ENCODE measurements at regions of chr3 and their contacts with region 1.

Region 1: DNA sequence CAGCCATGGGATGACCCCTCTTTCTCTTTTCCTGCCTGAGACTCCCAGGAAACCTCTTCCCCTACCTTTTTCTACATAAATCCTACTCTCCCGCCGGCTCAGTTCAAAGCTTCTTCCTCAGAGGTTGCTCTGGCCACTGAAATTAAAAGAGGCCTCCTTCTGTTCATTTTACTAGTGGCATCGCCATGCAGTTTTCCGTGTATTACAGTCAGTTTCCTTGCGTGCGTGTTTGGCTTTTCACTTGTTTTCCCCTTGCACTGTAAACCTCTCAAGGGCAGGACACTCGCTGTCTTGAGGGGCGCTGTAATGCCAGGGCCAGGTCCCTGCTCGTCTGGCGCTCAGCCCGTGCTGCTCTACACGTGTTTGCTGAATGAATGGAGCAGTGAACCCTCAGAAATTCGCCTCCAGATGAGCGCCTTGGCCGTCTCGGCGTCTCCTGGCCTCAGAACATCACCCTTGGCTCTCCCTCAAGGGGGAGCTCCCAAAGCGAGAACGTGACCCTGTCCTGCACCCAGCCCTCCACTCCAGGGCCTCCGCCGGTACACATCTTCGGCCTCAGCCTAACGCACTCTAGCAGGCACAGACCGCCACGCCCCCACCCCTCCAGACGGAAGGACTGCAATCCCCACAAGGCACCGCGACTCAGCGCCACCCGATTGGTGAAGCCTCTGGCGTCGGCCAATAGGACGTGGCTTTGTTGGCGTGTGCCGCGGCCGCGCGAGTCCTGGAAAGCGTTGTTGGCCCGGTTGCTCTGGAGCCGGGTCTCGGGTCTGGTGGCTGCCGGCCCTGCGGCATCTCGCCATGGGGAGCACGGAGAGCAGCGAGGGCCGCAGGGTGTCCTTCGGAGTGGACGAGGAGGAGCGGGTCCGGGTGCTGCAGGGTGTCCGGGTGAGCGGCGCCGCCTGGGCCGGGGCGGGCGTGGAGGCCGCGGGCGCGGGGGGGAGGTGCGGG is at the start of gene CHCHD6:
- DNase-seq: peak; percentile 92
- H3K4me3 Mint-ChIP-seq: peak within 1 kb of the TSS; percentile 96
- H3K27ac Mint-ChIP-seq: peak within 1 kb of the TSS; percentile 85
- H3K4me1 Mint-ChIP-seq: peaks cover 24% of the 10 kb centered on the region
- H3K27me3 Mint-ChIP-seq: peaks cover 40% of the 10 kb centered on the region
- total RNA-seq, gene CHCHD6: 15.7 and 17.5 TPM in 2 replicates

Region 2: GRCh38 chr3:125990253-125990970 is 713.4 kb before region 1 on chr3:
- intact Hi-C with region 1: loop called (anchors 10 kb)
- DNase-seq: peak; percentile 68
- H3K4me3 Mint-ChIP-seq: peak overlapping the region; percentile 90
- H3K27ac Mint-ChIP-seq: peak overlapping the region; percentile 88
- H3K4me1 Mint-ChIP-seq: peaks cover 16% of the 10 kb centered on the region
- H3K27me3 Mint-ChIP-seq: peaks cover 15% of the 10 kb centered on the region

Region 3: GRCh38 chr3:126357295-126358037 is 346.3 kb before region 1 on chr3 and contains the start of gene KLF15:
- intact Hi-C with region 1: loop called (anchors 5 kb)
- DNase-seq: peak; percentile 73
- H3K4me3 Mint-ChIP-seq: peak within 1 kb of the TSS; percentile 84
- H3K27ac Mint-ChIP-seq: peak within 1 kb of the TSS; percentile 48
- H3K4me1 Mint-ChIP-seq: peaks cover 8% of the 10 kb centered on the region
- H3K27me3 Mint-ChIP-seq: peaks cover 46% of the 10 kb centered on the region
- total RNA-seq, gene KLF15: 0.08 and 0.22 TPM in 2 replicates

Region 4: DNA sequence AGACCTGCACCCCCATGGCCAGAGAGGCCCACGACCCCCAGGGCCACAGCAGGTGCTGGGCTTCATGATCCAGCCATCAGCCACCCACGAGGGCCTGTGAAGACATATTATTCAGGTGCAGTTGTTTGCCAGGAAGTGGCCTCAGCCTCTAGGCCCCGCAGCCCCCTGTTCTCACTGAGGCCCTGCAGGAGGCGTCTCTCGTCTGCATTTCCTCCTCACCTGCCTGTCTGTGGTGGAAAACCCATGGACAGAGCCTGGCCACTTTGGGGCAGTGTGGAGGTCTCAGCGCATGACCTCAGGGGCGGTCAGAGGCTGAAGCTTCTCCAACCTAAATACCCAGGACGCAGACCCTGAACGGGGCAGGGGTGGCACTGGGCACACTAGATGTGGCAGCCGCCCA is 204.9 kb before region 1 on chr3:
- intact Hi-C with region 1: no loop called
- DNase-seq: no peak
- H3K4me3 Mint-ChIP-seq: no peak overlapping the region
- H3K27ac Mint-ChIP-seq: no peak overlapping the region
- H3K4me1 Mint-ChIP-seq: peaks cover 7% of the 10 kb centered on the region
- H3K27me3 Mint-ChIP-seq: no peaks in the 10 kb centered on the region

Region 5: DNA sequence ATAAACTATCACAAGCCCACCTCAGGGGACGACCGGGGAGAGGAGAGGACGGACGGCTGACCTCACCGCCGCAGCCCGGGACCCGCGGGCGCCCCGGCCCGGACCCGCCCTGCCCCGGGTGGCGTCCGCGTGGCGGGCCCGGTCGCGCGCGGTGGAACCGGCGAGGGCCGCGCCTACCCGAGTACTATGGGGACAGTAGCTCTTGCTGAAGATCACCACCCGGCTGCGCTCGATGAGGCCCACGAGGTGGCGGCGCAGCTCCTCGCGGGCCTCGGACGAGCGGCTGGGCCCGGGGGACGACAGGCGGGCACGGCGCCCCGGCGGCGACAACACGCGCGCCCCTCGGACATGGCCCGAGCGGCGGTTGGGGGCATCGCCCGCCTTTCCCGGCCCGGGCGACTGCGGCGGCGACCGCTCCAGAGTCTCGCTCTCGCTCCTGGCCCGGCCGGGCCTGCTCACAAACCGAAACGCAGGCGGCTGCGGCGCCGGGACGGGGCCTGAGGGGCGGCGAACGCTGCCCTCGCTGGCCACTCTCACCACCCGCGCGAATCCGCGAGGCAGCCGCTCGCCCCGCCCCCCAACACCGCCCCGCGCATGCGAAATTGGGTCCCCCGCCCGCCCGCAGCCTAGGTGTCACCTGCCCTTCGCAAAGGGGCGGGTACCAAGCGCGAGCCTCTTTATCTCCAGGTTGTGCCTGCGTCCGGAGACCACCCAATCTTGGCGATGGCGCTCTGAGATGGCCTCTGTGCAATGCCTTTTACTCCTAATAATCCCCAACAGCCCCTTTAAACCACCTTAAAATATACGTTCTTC is 49.0 kb before region 1 on chr3 and contains the start of gene TXNRD3:
- intact Hi-C with region 1: loop called (anchors 2 kb)
- DNase-seq: peak; percentile 48
- H3K4me3 Mint-ChIP-seq: peak within 1 kb of the TSS; percentile 75
- H3K27ac Mint-ChIP-seq: no peak within 1 kb of the TSS
- H3K4me1 Mint-ChIP-seq: no peaks in the 10 kb centered on the region
- H3K27me3 Mint-ChIP-seq: peaks cover 24% of the 10 kb centered on the region
- total RNA-seq, gene TXNRD3: 0.78 and 1.4 TPM in 2 replicates

Region 6: DNA sequence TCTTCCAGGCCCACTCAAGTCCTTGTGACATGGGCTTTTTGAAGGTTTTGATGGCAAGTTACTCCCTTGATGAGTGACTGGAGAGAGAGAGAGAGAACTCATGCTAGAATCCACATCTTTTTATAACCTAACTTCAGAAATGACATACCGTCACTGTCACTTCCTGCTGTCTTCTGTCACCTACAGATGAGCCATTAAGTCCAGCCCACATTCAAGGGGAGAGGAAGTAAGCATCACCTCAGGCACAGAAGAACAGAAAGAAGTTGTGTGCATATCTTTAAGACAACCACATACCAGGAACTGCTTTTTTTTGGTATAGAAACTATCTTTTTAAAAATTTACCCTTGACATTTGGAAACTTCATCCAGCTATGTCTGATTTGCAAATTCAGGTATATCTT is 32.3 kb before region 1 on chr3:
- intact Hi-C with region 1: no loop called
- DNase-seq: no peak
- H3K4me3 Mint-ChIP-seq: no peak overlapping the region
- H3K27ac Mint-ChIP-seq: no peak overlapping the region
- H3K4me1 Mint-ChIP-seq: no peaks in the 10 kb centered on the region
- H3K27me3 Mint-ChIP-seq: no peaks in the 10 kb centered on the region

Region 7: DNA sequence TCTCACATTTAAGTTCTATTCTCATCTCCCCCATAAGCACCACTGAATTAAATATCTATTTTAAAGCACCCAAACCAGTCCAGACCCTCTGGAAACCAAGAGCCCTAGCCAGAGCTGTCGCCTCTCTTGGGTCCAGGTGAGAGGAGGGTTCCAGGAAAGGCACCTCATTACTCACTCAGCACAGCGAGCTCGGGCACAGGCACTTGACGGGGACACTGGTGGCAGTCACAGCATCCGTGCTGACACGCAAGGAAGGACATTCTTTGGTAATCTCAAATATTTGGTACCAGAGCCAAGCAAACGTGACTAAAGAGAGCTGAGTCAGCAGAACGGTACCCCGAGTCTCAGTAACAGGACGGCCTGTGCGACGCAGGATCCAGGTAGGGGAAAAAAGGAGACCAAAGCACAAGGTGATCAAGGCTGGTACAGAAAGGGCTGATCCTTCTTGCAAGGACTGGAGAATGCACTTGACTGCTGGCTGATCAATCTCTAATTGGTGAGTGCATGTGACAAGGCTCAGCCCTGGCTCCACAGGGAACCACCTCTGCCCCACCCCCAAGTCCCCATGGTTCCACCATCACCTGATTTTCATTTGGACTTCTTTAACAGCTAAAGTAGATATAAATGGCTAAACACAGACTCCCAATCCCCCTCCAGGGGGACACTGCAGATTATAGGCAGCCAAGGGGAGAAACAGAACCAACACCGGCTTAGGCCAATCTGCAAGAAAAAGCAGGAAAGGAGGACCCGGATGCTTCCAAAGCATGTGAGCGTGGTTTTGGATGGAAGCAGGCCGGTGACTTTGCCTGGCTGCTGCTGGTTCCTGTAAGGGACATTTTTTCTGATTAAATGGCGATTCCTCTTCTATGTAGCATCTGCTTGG is 61.6 kb after region 1 on chr3:
- intact Hi-C with region 1: no loop called
- DNase-seq: no peak
- H3K4me3 Mint-ChIP-seq: no peak overlapping the region
- H3K27ac Mint-ChIP-seq: no peak overlapping the region
- H3K4me1 Mint-ChIP-seq: no peaks in the 10 kb centered on the region
- H3K27me3 Mint-ChIP-seq: peaks cover 4% of the 10 kb centered on the region

Region 8: DNA sequence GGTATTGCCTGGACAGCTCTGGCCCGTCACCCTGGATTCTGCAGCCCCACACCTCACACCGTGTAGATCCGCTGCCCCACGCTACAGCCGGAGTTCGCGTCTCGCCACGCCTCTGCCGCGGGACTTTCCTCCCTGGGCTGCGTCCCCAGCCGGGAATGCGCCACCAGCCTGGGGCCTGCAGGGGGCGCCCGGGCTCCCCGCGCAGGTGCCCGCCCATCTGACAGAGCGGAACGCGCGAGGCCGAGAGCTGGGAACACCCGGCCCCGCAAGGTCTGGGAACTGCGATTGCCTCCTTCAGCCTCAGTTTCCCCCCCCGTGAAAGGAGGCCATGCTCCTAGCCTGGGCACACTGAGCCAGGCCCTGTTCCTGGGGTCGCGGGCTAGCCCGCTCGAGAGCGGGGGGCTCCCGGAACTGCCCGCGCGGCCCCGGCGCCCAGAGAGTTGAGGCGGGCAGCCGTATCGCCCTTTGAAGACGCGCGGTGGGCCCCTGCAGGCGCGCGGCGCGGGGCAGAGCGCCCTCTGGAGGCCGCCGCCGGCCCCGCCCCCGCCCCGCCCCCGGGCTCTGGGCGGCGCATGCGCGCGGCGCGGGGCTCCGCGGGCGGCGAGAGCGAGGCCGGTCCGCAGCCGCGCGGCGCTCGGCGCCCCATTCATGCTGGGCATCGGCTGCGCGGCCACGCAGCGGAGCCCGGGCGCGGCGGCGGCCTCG is 278.8 kb after region 1 on chr3 and contains the start of gene PLXNA1:
- intact Hi-C with region 1: loop called (anchors 1 kb)
- DNase-seq: peak; percentile 87
- H3K4me3 Mint-ChIP-seq: peak within 1 kb of the TSS; percentile 81
- H3K27ac Mint-ChIP-seq: peak within 1 kb of the TSS; percentile 90
- H3K4me1 Mint-ChIP-seq: peaks cover 23% of the 10 kb centered on the region
- H3K27me3 Mint-ChIP-seq: peaks cover 4% of the 10 kb centered on the region
- total RNA-seq, gene PLXNA1: 22.1 and 25.5 TPM in 2 replicates

Region 9: GRCh38 chr3:127598841-127599570 is 895.2 kb after region 1 on chr3:
- intact Hi-C with region 1: loop called (anchors 1 kb)
- DNase-seq: no peak
- H3K4me3 Mint-ChIP-seq: peak overlapping the region; percentile 100
- H3K27ac Mint-ChIP-seq: peak overlapping the region; percentile 99
- H3K4me1 Mint-ChIP-seq: peaks cover 45% of the 10 kb centered on the region
- H3K27me3 Mint-ChIP-seq: no peaks in the 10 kb centered on the region

Measured in activated T-helper 1 cell treated with anti-CD3 and anti-CD28 coated beads, Interleukin-12 subunit alpha, Interleukin-12 subunit beta, Interleukin-2, Interleukin-4 antibody, amounts not matched to agents 30 ng/mL and 10 ng/mL and 1 ng/mL, durations not matched to agents 14 hours and 24 hours and 36 hours (primary cell).